Activated CD4-positive, alpha-beta memory T cell treated with anti-CD3 and anti-CD28 coated beads for 36 hours (primary cell): ENCODE measurements at regions of chr12 and their contacts with region 1.

Region 1: GRCh38 chr12:71780237-71780822 is 25.7 kb downstream of the RAB21 start:
- DNase-seq: peak; percentile 46
- H3K4me3 Mint-ChIP-seq: no peak overlapping the region
- H3K27ac Mint-ChIP-seq: peak overlapping the region; percentile 4
- H3K4me1 Mint-ChIP-seq: peaks cover 5% of the 10 kb centered on the region
- H3K27me3 Mint-ChIP-seq: no peaks in the 10 kb centered on the region

Region 2: DNA sequence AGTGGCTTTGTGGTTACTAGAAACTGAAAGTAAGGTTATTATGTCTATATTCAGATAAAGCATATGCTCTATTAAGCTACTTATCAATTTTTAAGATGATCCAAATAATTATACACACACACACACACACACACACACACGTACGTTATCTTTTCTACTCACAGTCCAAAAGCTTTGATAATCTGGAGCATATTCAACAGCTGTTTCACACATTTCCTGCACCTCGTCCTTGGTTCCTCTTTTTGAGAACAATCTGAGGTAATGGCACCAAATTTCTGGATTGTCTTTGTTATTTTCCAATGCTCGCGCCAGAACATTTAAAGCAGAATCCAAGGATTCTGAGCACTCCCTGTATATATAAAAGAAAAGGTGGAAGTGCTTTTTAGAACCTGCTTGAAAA is 154.2 kb before region 1 on chr12:
- CTCF ChIA-PET with region 1: no interaction called
- POLR2A ChIA-PET with region 1: no interaction called
- intact Hi-C with region 1: no loop called
- DNase-seq: no peak
- H3K4me3 Mint-ChIP-seq: no peak overlapping the region
- H3K27ac Mint-ChIP-seq: peak overlapping the region; percentile 33
- H3K4me1 Mint-ChIP-seq: peaks cover 10% of the 10 kb centered on the region
- H3K27me3 Mint-ChIP-seq: no peaks in the 10 kb centered on the region

Region 3: GRCh38 chr12:71791473-71792150 is 11.3 kb after region 1 on chr12:
- CTCF ChIA-PET with region 1: interaction called, 15 read pairs
- POLR2A ChIA-PET with region 1: no interaction called
- intact Hi-C with region 1: no loop called
- DNase-seq: no peak
- H3K4me3 Mint-ChIP-seq: no peak overlapping the region
- H3K27ac Mint-ChIP-seq: no peak overlapping the region
- H3K4me1 Mint-ChIP-seq: peaks cover 4% of the 10 kb centered on the region
- H3K27me3 Mint-ChIP-seq: no peaks in the 10 kb centered on the region

Region 4: GRCh38 chr12:71846322-71846940 is 66.1 kb after region 1 on chr12:
- CTCF ChIA-PET with region 1: interaction called, 29 read pairs
- POLR2A ChIA-PET with region 1: no interaction called
- intact Hi-C with region 1: loop called (anchors 1 kb)
- DNase-seq: no peak
- H3K4me3 Mint-ChIP-seq: no peak overlapping the region
- H3K27ac Mint-ChIP-seq: no peak overlapping the region
- H3K4me1 Mint-ChIP-seq: peaks cover 34% of the 10 kb centered on the region
- H3K27me3 Mint-ChIP-seq: no peaks in the 10 kb centered on the region